Activated CD4-positive, alpha-beta memory T cell treated with anti-CD3 and anti-CD28 coated beads, Interleukin-2, amount 10 ng/mL, durations not matched to agents 7 days and 5 days (primary cell): ENCODE measurements at regions of chr7 and their contacts with region 1.

Region 1: GRCh38 chr7:92669616-92670165 is 79.5 kb upstream of the FAM133B start:
- DNase-seq: no peak
- H3K4me3 Mint-ChIP-seq: no peak overlapping the region
- H3K27ac Mint-ChIP-seq: peak overlapping the region; percentile 38
- H3K4me1 Mint-ChIP-seq: peaks cover 73% of the 10 kb centered on the region
- H3K27me3 Mint-ChIP-seq: no peaks in the 10 kb centered on the region

Region 2: DNA sequence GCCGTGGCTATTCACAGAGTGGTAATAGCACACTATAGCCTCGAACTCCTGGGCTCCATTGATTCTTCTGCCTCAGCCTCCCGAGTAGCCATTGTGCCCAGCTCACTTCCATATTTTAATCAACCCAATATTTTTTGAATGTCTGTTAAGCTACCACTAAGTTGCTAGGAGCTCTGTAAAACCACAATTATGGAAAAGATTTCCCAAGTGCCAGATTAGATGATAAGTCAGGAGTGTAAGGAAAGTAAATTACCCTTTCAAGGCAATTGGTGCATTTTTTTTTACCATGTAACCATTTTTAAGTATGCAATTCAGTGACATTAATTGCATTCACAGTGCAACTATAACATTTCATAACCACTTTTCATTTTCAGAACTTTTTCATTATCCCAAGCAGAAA is 309.9 kb before region 1 on chr7:
- CTCF ChIA-PET with region 1: no interaction called
- POLR2A ChIA-PET with region 1: no interaction called
- DNase-seq: no peak
- H3K4me3 Mint-ChIP-seq: no peak overlapping the region
- H3K27ac Mint-ChIP-seq: no peak overlapping the region
- H3K4me1 Mint-ChIP-seq: peaks cover 6% of the 10 kb centered on the region
- H3K27me3 Mint-ChIP-seq: no peaks in the 10 kb centered on the region

Region 3: DNA sequence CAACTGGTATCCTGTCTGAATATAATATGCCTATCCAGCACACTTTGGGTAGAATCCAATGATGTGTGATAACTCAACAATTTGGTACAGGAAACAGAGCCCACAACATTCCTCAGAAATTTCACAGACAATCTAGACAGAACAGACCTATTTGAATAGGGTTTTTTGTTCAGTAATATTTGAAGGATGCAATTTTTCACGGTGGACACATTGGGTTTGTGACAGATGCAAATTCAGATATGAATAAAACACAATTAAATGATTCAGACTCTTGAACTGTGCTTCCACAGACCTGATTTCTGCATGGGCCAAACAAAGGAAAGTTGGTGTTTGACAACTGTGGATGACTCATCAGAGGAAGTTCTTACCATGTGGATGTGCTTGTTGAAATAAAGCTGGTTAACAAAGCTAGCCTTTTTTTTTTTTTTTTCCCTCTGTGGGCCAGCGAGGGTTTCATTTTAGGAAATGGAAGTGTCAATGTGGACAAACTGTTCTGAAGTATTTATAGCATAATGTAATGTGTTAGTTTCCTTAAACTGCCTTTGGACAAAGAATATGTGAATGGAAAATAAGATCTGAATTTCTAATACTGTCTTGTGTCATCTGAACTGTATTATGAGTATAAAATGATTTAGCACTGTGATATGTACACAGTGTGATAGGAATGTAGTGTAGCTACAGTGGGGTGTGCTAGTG is 36.3 kb before region 1 on chr7:
- CTCF ChIA-PET with region 1: interaction called, 3 read pairs
- POLR2A ChIA-PET with region 1: interaction called, 12 read pairs
- DNase-seq: no peak
- H3K4me3 Mint-ChIP-seq: peak overlapping the region; percentile 16
- H3K27ac Mint-ChIP-seq: peak overlapping the region; percentile 80
- H3K4me1 Mint-ChIP-seq: peaks cover 78% of the 10 kb centered on the region
- H3K27me3 Mint-ChIP-seq: no peaks in the 10 kb centered on the region

Region 4: GRCh38 chr7:92641921-92642511 is 27.7 kb before region 1 on chr7:
- CTCF ChIA-PET with region 1: interaction called, 4 read pairs
- POLR2A ChIA-PET with region 1: interaction called, 14 read pairs
- DNase-seq: peak; percentile 72
- H3K4me3 Mint-ChIP-seq: peak overlapping the region; percentile 18
- H3K27ac Mint-ChIP-seq: peak overlapping the region; percentile 91
- H3K4me1 Mint-ChIP-seq: peaks cover 88% of the 10 kb centered on the region
- H3K27me3 Mint-ChIP-seq: no peaks in the 10 kb centered on the region

Region 5: DNA sequence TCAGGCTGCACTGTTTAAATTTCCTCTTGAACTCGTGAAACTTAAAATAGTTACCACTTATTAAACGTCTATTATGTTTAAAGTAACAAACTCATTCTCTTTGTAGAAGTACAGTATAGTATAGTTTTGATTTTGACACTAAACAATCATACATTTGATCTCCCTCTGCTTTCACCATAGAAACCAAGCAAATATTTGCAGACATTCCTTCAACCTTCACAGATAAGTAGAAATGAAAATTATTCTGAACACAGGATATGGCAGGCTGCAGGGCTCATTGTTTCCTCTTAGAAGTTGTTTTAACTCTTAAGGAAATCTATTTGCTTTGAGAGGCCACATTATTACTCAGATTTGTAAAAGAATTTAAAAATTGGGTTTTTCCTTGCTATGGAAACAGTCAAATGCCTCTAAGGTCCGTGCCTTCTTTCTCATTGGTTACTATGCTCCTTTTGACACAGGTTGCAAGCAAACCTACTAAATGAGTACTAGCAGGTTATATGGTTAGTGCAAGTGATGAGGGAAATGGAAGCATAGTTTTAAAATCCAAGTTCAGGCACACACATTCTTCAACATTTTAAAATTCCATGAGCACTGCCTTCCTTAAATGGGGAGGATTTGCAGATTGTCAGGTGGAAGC is 13.3 kb after region 1 on chr7:
- CTCF ChIA-PET with region 1: interaction called, 3 read pairs
- POLR2A ChIA-PET with region 1: interaction called, 21 read pairs
- DNase-seq: no peak
- H3K4me3 Mint-ChIP-seq: no peak overlapping the region
- H3K27ac Mint-ChIP-seq: peak overlapping the region; percentile 86
- H3K4me1 Mint-ChIP-seq: peaks cover 87% of the 10 kb centered on the region
- H3K27me3 Mint-ChIP-seq: no peaks in the 10 kb centered on the region